Astrocyte of the cerebellum (primary cell): ENCODE measurements at regions of chr12 and their contacts with region 1.

Region 1: GRCh38 chr12:104371043-104371870 is 67.7 kb downstream of the EID3 start:
- DNase-seq: no peak
- H3K4me3 ChIP-seq: no peak overlapping the region
- CTCF ChIP-seq: no peak

Region 2: GRCh38 chr12:104314242-104314614 is 57.0 kb before region 1 on chr12:
- in situ Hi-C with region 1: no loop called
- DNase-seq: no peak
- H3K4me3 ChIP-seq: no peak overlapping the region
- CTCF ChIP-seq: no peak

Region 3: DNA sequence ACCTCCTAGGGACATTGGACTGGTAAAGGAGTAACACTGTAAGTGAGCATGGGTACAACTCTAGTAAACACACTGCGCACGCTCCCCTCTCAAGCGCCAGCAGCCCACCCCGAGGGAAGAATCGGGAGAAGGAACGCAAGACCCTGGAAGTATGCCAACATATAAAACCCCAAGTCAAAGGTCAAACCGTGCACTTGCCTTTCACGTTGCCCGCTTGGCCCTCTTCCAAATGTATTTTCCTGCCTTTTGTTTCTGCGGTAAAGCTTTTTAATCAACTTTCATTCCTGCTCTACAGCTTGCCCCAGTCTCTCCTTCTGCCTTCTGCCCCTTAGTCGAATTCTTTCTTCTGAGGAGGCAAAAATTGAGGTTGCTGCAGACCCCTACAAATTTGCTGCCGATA is 67.9 kb after region 1 on chr12:
- in situ Hi-C with region 1: loop called (anchors 5 kb)
- DNase-seq: no peak
- H3K4me3 ChIP-seq: no peak overlapping the region
- CTCF ChIP-seq: no peak